ENCODE measurements at regions of chr7 and their contacts with region 1.

Region 1: GRCh38 chr7:48088559-48089045 is 463 bp upstream of the UPP1 start:
- DNase-seq: peak; percentile 92
- ATAC-seq: peak; percentile 65

Region 2: DNA sequence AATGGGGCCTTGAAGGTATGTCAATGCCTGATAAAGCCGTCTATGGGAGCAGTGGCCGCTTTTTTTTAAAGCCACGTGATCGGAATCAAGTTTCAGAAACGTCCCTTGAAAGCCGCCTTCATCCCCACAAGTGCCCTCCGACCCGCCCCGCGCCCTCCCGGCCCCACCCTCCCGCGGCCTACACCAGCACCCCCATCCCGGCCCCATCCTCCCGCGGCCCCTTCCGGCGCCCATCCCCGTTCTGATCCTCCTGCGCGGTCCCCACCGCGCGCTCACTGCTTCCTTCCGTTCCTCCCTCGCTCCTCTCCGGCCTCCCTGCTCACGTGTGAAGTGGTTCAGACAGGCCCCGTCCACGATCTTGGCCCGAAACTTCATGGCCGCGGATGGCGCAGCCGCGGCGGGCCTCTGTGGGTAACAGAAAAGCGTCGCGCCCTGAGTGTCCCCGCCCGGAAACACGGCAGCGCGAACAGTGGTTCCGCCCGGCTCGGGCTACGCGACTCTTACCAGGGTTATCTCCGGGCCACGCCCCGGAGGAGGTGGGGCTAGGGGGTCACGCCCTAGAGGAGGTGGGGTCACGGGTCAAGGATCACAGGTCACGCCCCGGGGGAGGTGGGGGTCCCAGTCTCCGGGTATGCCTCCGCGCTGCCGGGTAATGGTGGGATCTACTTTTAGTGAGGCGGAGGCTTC is 109.3 kb before region 1 on chr7 and contains the start of gene HUS1:
- intact Hi-C with region 1: loop called (anchors 5 kb)
- DNase-seq: peak; percentile 98
- ATAC-seq: peak; percentile 99
- total RNA-seq, gene HUS1: 29.6 TPM

Region 3: GRCh38 chr7:48035301-48035966 is 53.2 kb before region 1 on chr7 and contains the start of gene C7orf57:
- intact Hi-C with region 1: loop called (anchors 2 kb)
- DNase-seq: peak; percentile 97
- ATAC-seq: peak; percentile 99
- total RNA-seq, gene C7orf57: not detected

Region 4: DNA sequence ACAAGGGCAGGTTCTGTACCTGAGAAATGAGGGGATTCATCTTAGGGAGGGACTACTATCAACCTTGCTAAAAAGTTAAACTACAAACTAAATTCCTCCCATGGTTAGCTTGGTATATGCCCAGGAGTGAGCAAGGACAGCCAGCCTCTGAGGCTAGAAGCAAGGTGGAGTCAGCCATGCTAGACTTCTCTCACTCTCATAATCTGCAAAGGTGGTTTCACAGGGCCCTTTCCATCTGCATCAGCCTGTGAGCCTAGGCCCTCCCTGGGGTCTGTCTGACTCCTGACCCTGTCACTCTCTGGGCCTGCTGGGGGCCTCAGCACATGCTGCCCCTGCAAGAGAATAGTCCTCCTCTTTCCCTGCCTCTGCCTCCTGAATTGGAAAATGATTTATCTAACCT is 148.8 kb after region 1 on chr7:
- intact Hi-C with region 1: no loop called
- DNase-seq: no peak
- ATAC-seq: no peak

Measured in Right ventricle myocardium inferior (tissue), 1 donor.